ENCODE measurements at regions of chr3 and their contacts with region 1.

Region 1: DNA sequence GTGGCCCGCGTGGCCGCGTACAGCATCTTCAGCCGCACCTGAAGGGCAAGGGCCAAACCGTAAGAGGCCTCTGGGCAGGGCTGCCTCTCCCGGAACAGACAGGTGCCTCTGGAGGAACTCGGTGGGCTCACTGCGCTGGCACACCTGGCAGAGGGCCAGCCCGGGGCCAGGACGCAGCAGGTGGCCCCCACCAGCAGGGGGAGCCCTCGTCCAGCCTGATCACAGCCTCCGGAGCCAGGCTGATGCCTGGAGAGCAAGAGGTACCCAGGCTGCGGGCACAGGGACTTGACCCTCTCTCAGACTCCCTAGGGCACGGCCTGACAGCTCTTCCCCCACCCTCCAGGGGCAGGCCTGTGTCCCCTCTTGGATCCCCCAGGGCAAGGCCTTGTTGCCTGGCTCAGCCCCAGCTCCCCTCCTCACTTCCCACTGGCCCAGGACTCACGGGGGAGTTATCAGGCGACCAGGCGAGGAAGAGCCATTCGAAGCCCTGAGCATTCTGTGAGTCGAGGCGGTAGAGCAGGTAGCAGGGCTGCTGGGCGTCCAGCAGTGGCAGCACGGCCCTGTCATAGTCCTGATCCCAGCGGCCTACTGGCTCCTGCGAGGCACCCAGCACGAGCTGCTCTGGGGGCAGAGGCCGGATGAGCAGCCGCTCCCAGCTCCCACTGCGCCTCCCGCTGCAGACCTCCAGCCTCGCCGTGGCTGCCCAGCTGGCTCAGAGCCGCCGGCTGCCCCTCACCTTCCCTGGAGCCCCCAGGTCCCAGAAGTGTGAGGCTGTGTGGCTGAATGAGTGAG is 6.3 kb upstream of the TLR9 start:
- DNase-seq: no peak
- H3K27ac ChIP-seq: peak overlapping the region; percentile 95
- CTCF ChIP-seq: peak; percentile 82

Region 2: DNA sequence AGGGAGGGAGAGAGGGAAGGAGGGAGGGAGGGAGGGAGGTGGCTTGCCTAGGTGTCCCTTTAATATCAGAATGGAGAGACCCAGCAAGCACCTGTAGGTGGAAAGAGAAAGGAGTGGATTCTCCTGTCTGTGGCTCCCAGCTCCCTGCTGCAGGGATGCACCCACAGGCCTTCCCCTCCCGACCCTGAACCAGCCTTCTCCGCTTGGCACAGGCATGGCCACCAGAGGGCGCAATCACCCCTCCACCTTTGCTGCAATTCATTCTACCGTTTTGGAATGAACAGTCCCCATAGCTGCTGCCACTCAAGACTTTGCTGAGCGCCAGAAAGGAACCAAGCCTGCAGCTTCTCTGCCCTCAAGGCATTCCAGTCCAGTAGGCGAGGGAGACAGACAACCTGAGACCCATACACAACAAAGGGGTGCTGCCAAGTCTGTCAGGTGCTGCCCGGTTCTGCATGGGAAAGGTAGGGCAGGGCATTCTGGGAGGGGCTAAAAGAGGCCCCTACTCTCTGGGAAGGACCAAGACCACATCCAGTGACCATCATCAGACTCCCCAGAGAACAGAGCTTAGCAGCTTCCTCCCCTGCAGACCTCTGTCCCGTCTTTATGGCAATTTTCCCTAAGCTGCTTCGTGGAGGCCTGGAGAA is 11.2 kb before region 1 on chr3:
- CTCF ChIA-PET with region 1: interaction called, 16 read pairs
- POLR2A ChIA-PET with region 1: no interaction called
- DNase-seq: peak; percentile 68
- H3K27ac ChIP-seq: peak overlapping the region; percentile 28
- CTCF ChIP-seq: peak; percentile 90

Region 3: DNA sequence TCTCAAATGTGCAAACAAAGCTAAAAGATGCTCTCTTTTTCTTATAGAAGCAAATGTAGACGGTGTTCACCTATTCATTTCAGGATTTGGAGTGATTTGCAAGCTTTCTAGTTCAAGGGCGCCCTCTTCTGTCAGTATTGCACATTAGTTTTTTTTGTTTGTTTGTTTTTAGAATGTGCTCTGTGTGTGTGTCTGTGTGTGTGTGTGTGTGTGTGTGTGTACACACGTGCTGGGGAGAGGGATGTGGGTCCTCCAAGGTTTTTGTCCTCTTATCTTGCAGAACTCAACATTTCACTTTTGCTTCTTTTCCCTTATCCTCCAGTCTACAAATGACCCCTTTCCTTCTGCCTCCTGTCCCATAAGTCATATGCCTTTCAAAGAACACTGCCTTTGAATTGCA is 107.9 kb after region 1 on chr3:
- CTCF ChIA-PET with region 1: interaction called, 10 read pairs
- POLR2A ChIA-PET with region 1: no interaction called
- DNase-seq: peak; percentile 31
- H3K27ac ChIP-seq: no peak overlapping the region
- CTCF ChIP-seq: peak; percentile 78